ENCODE measurements at regions of chr13 and their contacts with region 1.

Region 1: GRCh38 chr13:76446191-76446590 is 440.0 kb downstream of the KCTD12 start:
- DNase-seq: no peak
- ATAC-seq: no peak
- H3K4me3 ChIP-seq: no peak overlapping the region
- H3K4me3 Mint-ChIP-seq: no peak overlapping the region
- H3K27ac ChIP-seq: no peak overlapping the region
- H3K27ac Mint-ChIP-seq: no peak overlapping the region
- H3K4me1 ChIP-seq: no peaks in the 10 kb centered on the region
- H3K4me1 Mint-ChIP-seq: no peaks in the 10 kb centered on the region
- H3K27me3 ChIP-seq: no peaks in the 10 kb centered on the region
- H3K27me3 Mint-ChIP-seq: peaks cover 7% of the 10 kb centered on the region
- CTCF ChIP-seq: no peak

Region 2: DNA sequence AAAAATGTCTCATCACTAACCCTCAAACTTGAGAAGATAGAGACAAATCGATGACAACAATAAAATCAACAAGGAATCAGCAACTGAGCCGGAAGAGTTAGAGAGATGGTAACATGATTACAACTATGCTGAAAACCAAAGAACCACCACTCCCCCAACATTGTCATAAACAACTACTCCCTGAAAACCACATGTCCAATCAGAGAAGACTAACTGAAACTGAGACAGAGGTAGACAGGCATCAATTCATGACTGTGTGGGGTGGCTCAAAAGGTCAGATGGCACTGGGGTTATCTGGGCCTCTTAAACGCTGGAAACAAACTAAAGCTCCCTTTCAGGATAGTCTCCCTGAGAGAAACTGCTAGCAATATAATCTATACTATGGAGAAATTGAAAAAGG is 48.8 kb before region 1 on chr13:
- CTCF ChIA-PET with region 1: no interaction called
- POLR2A ChIA-PET with region 1: no interaction called
- intact Hi-C with region 1: no loop called
- DNase-seq: peak in 3 of 14 experiments; percentile 13 to 62 (median 33)
- ATAC-seq: peak; percentile 82
- H3K4me3 ChIP-seq: no peak overlapping the region
- H3K4me3 Mint-ChIP-seq: no peak overlapping the region
- H3K27ac ChIP-seq: no peak overlapping the region
- H3K27ac Mint-ChIP-seq: peak overlapping the region; percentile 80
- H3K4me1 ChIP-seq: no peaks in the 10 kb centered on the region
- H3K4me1 Mint-ChIP-seq: peaks cover 7% of the 10 kb centered on the region
- H3K27me3 ChIP-seq: no peaks in the 10 kb centered on the region
- H3K27me3 Mint-ChIP-seq: no peaks in the 10 kb centered on the region
- CTCF ChIP-seq: no peak

Region 3: DNA sequence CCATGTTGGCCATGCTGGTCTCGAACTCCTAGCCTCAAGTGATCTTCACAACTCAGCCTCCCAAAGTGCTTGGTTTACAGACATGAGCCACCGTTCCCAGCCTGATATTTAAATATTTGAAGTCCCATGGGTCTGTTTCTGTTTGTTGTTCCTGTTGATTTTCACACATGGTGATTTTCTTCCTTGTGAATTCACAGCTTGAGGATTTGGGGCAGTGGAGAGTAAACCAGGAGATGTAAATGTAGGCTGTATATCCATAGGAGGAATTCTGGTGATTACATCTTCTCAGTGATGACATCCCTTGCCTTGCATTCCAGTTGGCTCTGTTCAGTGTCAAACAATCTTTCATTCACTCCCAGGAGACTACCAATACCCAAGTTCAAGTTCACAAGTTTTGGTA is 31.9 kb before region 1 on chr13:
- CTCF ChIA-PET with region 1: no interaction called
- POLR2A ChIA-PET with region 1: no interaction called
- intact Hi-C with region 1: loop called in 1 of 2 experiments (anchors 1 kb)
- DNase-seq: no peak
- ATAC-seq: no peak
- H3K4me3 ChIP-seq: no peak overlapping the region
- H3K4me3 Mint-ChIP-seq: no peak overlapping the region
- H3K27ac ChIP-seq: no peak overlapping the region
- H3K27ac Mint-ChIP-seq: no peak overlapping the region
- H3K4me1 ChIP-seq: no peaks in the 10 kb centered on the region
- H3K4me1 Mint-ChIP-seq: no peaks in the 10 kb centered on the region
- H3K27me3 ChIP-seq: no peaks in the 10 kb centered on the region
- H3K27me3 Mint-ChIP-seq: no peaks in the 10 kb centered on the region
- CTCF ChIP-seq: no peak

Measured in CD4-positive, alpha-beta T cell (primary cell).